Activated CD4-positive, alpha-beta memory T cell treated with anti-CD3 and anti-CD28 coated beads for 36 hours (primary cell): ENCODE measurements at regions of chr4 and their contacts with region 1.

Region 1: GRCh38 chr4:162061214-162061613 is 102.6 kb downstream of the FSTL5 start:
- DNase-seq: no peak
- H3K4me3 Mint-ChIP-seq: no peak overlapping the region
- H3K27ac Mint-ChIP-seq: no peak overlapping the region
- H3K4me1 Mint-ChIP-seq: no peaks in the 10 kb centered on the region
- H3K27me3 Mint-ChIP-seq: no peaks in the 10 kb centered on the region

Region 2: GRCh38 chr4:162241859-162242258 is 180.6 kb after region 1 on chr4:
- CTCF ChIA-PET with region 1: no interaction called
- POLR2A ChIA-PET with region 1: no interaction called
- intact Hi-C with region 1: loop called (anchors 5 kb)
- DNase-seq: no peak
- H3K4me3 Mint-ChIP-seq: no peak overlapping the region
- H3K27ac Mint-ChIP-seq: no peak overlapping the region
- H3K4me1 Mint-ChIP-seq: no peaks in the 10 kb centered on the region
- H3K27me3 Mint-ChIP-seq: no peaks in the 10 kb centered on the region